ENCODE measurements at regions of chr1 and their contacts with region 1.

Region 1: DNA sequence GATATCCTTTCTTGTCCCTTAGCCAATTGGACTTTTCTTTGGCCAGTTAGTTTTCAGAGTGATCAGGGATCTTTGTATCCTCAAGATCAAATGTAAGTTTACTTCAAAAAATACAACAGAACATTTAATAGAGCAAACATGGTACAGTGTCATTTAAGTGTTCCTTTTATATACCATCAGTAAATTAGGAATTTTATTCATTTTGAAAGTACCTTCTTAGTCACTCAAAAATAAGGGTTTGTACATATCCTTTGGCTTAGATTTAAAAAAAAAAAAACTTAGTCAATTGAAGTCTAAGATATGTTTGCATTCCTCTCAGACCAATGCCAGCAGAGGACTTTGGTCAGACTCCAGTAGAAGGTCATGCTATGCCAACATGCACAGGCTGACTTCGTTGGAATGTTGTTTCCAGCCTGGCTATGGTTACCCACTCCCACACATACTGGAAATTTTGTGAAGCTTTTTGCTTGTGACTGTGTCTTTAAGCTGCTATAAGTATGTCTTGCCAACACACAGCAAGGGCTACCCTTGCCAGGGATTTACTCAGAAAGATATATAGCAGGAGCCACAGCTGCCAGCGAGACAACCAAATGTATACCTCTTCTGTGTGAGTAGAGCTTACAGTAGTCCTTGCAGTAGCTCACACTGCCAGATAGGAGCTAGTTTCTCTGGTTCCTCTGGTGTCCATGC is 81.5 kb upstream of the LRIF1 start:
- DNase-seq: no peak
- ATAC-seq: no peak
- H3K4me3 ChIP-seq: no peak overlapping the region
- H3K27ac ChIP-seq: no peak overlapping the region
- H3K4me1 ChIP-seq: no peaks in the 10 kb centered on the region
- H3K27me3 ChIP-seq: no peaks in the 10 kb centered on the region
- CTCF ChIP-seq: no peak

Region 2: GRCh38 chr1:110462964-110463363 is 582.2 kb before region 1 on chr1:
- intact Hi-C with region 1: no loop called
- DNase-seq: no peak
- ATAC-seq: no peak
- H3K4me3 ChIP-seq: no peak overlapping the region
- H3K27ac ChIP-seq: no peak overlapping the region
- H3K4me1 ChIP-seq: peaks cover 14% of the 10 kb centered on the region
- H3K27me3 ChIP-seq: no peaks in the 10 kb centered on the region
- CTCF ChIP-seq: no peak

Region 3: DNA sequence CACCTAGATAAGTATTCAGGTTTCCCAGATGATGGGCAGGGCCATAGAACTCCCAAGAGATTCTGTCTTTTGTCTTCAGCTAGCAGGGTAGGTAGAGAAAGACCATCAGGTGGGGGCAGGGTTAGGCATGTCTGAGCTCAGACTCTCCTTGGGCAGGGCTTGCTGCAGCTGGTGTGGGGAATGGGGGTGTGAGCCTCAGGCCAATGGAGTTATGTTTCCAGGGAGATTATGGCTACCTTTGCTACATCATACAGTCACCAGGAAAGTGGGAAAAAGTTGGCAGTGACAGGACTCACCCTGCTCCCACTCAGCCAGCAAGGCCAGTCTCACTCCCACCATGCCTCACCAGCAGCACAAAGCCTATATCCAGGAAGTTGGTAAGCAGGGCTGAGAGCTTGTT is 16.9 kb after region 1 on chr1:
- intact Hi-C with region 1: loop called in 1 of 2 experiments (anchors 2 kb)
- DNase-seq: no peak
- ATAC-seq: no peak
- H3K4me3 ChIP-seq: no peak overlapping the region
- H3K27ac ChIP-seq: no peak overlapping the region
- H3K4me1 ChIP-seq: no peaks in the 10 kb centered on the region
- H3K27me3 ChIP-seq: no peaks in the 10 kb centered on the region
- CTCF ChIP-seq: no peak

Region 4: GRCh38 chr1:111366256-111366655 is 321.1 kb after region 1 on chr1:
- intact Hi-C with region 1: no loop called
- DNase-seq: no peak
- ATAC-seq: no peak
- H3K4me3 ChIP-seq: no peak overlapping the region
- H3K27ac ChIP-seq: no peak overlapping the region
- H3K4me1 ChIP-seq: no peaks in the 10 kb centered on the region
- H3K27me3 ChIP-seq: peaks cover 0 to 15% (median 0%) of the 10 kb centered on the region in 3 donors
- CTCF ChIP-seq: no peak